Colonic mucosa (tissue), 4 donors: ENCODE measurements at regions of chr10 and their contacts with region 1.

Region 1: GRCh38 chr10:34723750-34724149 is 91.3 kb downstream of the PARD3 start:
- DNase-seq: peak; percentile 65
- H3K4me3 ChIP-seq: no peak overlapping the region
- H3K27ac ChIP-seq: no peak overlapping the region
- H3K4me1 ChIP-seq: no peaks in the 10 kb centered on the region
- H3K27me3 ChIP-seq: no peaks in the 10 kb centered on the region
- CTCF ChIP-seq: peak; percentile 40

Region 2: GRCh38 chr10:34768261-34768971 is 44.7 kb after region 1 on chr10:
- intact Hi-C with region 1: no loop called
- DNase-seq: peak; percentile 87
- H3K4me3 ChIP-seq: no peak overlapping the region
- H3K27ac ChIP-seq: peak overlapping the region; percentile 14
- H3K4me1 ChIP-seq: peaks cover 2% of the 10 kb centered on the region
- H3K27me3 ChIP-seq: no peaks in the 10 kb centered on the region
- CTCF ChIP-seq: no peak

Region 3: DNA sequence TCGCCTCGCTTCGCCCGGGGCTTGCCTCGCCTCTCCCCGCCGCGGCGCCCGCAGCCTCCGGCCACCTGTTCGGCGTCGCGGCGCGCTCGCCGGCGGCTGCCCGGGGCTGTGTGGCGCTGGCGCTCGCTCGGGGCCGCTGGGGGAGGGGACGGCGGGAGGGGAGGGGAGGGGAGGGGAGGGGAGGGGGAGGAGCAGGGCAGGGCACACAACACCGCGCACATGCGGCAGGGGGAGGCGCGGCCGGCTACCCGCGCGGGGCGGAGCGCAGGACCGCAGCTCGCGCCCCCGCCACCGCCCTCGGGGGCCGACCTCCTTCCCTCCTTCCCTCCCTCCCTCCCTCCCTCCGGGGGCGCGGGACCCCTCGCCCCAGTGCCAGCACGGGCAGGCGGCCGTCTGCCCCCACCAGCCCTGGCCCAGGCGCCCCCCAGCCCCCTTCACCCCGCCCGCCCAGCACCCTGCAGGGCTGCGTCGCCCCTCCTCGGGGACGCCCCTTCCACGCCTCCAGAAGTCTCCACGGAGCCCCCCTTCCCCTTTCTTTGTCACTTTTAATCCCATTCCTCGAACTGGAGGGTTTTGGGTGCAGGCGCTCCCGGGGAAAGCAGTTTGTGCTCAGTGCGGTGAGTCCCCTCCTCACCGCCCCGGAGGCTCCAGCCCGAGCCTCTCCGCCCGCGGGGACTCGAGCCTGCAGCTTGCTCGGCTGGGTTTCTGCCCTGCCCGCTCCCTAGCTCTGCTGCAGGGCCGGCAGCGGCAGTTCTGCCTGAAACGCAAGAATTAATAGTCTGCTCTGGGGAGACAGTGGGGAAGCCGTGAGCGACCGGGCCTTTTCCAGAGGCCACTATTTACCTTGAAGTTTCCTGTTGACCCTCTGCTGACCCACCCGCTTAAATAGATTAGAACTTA is 91.7 kb after region 1 on chr10 and contains the start of gene PARD3:
- intact Hi-C with region 1: loop called (anchors 10 kb)
- DNase-seq: peak; percentile 69
- H3K4me3 ChIP-seq: peak within 1 kb of the TSS; percentile 92
- H3K27ac ChIP-seq: peak within 1 kb of the TSS; percentile 76
- H3K4me1 ChIP-seq: peaks cover 7% of the 10 kb centered on the region
- H3K27me3 ChIP-seq: no peaks in the 10 kb centered on the region
- CTCF ChIP-seq: no peak
- total RNA-seq, gene PARD3: 41.7 to 48.8 TPM

Region 4: DNA sequence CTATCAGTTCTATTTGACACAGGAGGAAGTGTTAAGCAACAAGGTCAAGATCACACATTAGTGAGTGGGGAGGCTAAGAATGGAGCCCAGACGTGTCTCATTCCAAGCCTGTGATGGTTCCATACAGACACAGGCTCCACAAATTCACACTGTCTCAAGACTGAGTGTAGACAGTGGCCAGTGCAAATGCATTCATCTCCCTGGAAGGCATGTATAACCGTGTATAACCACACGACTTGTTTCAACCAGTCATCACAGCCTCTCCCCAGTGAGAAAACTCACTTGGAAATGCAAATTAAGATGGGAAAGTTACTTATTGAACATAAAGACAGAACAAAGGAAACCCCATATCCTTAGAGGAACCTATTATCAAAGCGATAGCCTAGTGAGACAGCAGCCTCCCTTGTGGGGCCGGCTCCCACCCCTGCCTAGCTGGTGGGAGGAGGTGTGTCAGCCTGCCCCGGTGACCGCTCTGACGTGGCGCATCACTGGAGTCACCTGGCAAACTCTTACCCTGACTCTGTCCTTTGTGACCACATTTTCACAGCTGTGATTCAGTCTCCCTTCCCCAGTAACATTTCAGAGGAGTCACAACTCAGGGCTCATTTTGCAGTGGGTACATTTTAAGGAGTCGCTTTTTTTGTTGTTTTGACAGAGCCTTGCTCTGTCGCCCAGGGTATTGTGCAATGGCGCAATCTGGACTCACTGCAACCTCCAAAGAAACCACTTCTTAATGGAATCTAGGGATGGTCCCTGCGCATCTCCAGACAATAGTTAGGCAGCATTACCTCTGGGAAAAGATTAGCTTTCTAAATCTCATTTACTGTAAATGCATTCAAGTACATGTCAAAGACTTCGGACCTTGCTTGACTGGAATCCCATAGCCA is 218.0 kb after region 1 on chr10:
- intact Hi-C with region 1: loop called (anchors 10 kb)
- DNase-seq: no peak
- H3K4me3 ChIP-seq: no peak overlapping the region
- H3K27ac ChIP-seq: no peak overlapping the region
- H3K4me1 ChIP-seq: no peaks in the 10 kb centered on the region
- H3K27me3 ChIP-seq: no peaks in the 10 kb centered on the region
- CTCF ChIP-seq: no peak

Region 5: DNA sequence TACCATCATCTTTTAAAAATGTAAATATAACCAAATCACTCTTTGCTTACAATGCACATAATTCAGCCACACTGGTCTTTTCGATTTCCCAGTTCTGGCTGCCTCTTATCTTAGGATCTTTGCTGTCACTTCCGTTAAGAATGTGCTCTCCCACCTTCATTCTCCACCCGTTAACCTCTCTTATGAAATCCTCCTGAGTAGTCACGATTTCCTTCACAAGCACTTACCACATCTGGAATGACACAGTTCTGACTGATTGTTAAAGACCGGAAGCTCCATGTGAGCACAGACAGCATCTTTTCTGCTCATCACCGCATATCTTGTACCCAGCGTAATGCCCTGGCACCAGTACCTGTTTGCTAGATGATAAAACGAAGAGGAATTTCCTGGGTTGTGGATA is 282.1 kb after region 1 on chr10:
- intact Hi-C with region 1: no loop called
- DNase-seq: no peak
- H3K4me3 ChIP-seq: no peak overlapping the region
- H3K27ac ChIP-seq: no peak overlapping the region
- H3K4me1 ChIP-seq: no peaks in the 10 kb centered on the region
- H3K27me3 ChIP-seq: no peaks in the 10 kb centered on the region
- CTCF ChIP-seq: no peak